Activated naive CD4-positive, alpha-beta T cell treated with anti-CD3 and anti-CD28 coated beads for 36 hours (primary cell): ENCODE measurements at regions of chr10 and their contacts with region 1.

Region 1: DNA sequence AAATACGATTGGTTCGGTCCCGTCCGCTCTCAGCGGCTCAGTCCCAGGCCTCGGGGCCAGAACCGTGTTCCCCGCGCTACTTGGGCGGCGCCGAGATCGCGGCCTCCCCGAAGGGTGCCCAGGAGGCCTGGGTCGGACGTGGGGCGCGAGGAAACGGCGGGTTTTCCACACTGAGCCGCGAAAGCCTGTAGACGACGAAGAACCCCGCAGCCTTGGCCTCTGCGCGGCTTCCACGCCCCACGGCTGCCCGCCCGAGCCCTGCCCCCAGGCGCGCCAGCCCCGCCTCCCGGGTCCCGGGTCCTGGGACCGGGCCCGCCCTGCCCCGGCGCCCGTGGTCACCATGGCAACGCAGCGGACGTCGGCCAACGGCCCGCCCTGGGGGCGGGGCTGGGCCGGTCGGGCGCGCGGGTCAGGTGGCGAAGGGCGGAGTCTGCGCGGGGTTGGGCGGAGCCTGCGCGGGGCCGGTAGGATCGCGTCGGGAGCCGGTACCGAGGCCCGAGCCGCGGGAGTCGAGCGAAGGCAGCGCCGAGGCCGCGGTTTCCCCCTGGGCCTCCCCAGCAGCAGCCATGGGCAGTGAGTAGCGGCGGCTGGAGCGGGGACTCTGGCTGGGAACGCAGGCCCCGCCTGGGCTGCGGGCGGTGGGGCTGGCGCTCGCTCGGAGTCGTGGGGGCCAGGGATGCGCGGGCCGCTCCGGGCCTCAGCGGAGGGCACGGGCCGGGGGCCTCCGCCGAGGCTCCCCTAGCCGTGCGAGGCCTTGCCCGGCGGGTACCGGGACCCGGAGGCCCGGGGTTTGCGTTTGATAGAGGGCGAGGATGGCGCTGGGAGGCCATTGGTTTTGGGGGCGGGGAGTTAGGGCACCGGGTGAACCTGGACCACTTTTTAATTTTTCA is at the start of gene SEC61A2:
- DNase-seq: peak; percentile 97
- H3K4me3 Mint-ChIP-seq: peak within 1 kb of the TSS; percentile 83
- H3K27ac Mint-ChIP-seq: peak within 1 kb of the TSS; percentile 76
- H3K4me1 Mint-ChIP-seq: peaks cover 33% of the 10 kb centered on the region
- H3K27me3 Mint-ChIP-seq: no peaks in the 10 kb centered on the region
- total RNA-seq, gene SEC61A2: 18.2 to 20.0 TPM

Region 2: GRCh38 chr10:11328264-11329061 is 801.0 kb before region 1 on chr10:
- CTCF ChIA-PET with region 1: no interaction called
- intact Hi-C with region 1: loop called (anchors 10 kb)
- DNase-seq: no peak
- H3K4me3 Mint-ChIP-seq: no peak overlapping the region
- H3K27ac Mint-ChIP-seq: peak overlapping the region; percentile 55
- H3K4me1 Mint-ChIP-seq: peaks cover 53% of the 10 kb centered on the region
- H3K27me3 Mint-ChIP-seq: no peaks in the 10 kb centered on the region

Region 3: GRCh38 chr10:12113627-12114026 is 15.8 kb before region 1 on chr10:
- CTCF ChIA-PET with region 1: no interaction called
- intact Hi-C with region 1: loop called (anchors 2 kb)
- DNase-seq: no peak
- H3K4me3 Mint-ChIP-seq: no peak overlapping the region
- H3K27ac Mint-ChIP-seq: peak overlapping the region; percentile 95
- H3K4me1 Mint-ChIP-seq: peaks cover 40% of the 10 kb centered on the region
- H3K27me3 Mint-ChIP-seq: no peaks in the 10 kb centered on the region

Region 4: DNA sequence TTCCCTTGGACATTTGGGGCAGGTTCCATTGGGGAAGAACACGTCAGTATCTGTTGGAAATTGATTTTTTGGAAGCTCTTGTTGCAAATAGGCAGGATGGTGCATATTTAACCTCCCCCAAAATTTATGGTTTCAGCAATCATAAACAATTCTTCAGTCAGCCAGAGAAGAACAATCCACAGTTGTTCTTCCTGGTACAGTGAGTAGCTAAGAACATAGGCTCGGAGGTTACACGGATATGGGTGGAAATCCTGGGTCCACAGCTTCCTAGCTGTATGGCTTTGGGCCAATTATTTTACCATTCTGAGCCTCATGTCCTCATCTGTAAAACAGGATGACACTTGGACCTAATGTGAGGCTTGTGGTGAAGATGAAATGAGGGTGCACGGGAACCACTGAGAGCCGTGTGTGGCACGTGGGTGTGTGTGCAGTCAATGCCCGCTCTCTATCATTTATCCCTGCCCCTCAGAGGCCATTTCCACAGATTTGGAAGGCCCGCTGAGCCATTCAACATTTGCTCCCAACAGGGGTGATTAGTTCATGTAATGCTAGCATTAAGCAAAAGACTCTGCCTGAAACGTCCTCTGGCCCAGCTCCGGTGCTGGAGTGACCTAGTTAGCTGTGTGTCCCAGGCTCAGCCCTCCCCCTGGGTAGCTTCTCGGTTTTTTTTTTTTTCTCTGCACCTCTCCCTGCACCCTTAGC is 229.5 kb after region 1 on chr10:
- CTCF ChIA-PET with region 1: no interaction called
- intact Hi-C with region 1: no loop called
- DNase-seq: peak; percentile 28
- H3K4me3 Mint-ChIP-seq: no peak overlapping the region
- H3K27ac Mint-ChIP-seq: no peak overlapping the region
- H3K4me1 Mint-ChIP-seq: peaks cover 43% of the 10 kb centered on the region
- H3K27me3 Mint-ChIP-seq: no peaks in the 10 kb centered on the region